ENCODE measurements at regions of chr2 and their contacts with region 1.

Region 1: GRCh38 chr2:86079981-86080911 is 25.4 kb downstream of the POLR1A start:
- DNase-seq: peak; percentile 43 to 92 (median 82)

Region 2: DNA sequence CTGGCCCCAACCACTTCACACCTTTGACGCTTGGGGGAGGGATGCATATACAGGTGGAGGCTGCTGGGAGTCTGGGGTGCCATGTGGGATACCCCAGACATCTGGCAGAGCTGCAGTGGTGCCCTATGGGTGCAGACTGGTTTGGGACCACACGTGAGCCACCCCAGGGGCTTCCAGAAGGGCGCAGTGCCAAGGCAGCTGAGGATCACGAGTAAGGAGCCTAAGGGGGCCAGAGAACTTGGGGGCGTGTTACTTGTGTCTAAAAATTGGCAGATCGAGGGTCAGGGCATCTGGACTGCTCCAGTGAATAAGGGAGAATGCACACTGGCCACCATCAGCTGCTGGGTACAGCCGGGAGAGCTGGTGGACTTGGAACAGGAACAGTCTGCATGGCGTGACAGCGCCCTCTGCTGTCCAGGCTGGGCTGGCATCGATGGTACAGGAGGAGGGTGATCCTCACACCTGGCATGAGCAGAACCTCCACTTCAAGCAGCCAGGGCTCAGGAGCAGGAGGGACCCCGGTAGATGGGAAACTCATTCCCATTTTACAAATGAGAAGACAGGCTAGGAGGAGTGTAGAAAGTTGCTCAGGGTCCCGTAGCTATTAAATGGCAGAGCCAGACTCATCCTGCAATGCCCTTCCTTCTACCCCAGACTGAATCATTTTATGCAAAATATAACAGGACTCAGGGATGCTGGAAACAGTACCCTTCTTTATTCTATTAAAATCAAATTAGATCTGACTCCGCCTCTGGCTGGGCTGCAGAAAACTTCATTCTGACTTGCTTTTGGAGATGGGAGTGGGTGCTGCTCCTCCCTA is 266.1 kb before region 1 on chr2:
- intact Hi-C with region 1: no loop called
- DNase-seq: peak; percentile 84 to 98 (median 95)

Region 3: DNA sequence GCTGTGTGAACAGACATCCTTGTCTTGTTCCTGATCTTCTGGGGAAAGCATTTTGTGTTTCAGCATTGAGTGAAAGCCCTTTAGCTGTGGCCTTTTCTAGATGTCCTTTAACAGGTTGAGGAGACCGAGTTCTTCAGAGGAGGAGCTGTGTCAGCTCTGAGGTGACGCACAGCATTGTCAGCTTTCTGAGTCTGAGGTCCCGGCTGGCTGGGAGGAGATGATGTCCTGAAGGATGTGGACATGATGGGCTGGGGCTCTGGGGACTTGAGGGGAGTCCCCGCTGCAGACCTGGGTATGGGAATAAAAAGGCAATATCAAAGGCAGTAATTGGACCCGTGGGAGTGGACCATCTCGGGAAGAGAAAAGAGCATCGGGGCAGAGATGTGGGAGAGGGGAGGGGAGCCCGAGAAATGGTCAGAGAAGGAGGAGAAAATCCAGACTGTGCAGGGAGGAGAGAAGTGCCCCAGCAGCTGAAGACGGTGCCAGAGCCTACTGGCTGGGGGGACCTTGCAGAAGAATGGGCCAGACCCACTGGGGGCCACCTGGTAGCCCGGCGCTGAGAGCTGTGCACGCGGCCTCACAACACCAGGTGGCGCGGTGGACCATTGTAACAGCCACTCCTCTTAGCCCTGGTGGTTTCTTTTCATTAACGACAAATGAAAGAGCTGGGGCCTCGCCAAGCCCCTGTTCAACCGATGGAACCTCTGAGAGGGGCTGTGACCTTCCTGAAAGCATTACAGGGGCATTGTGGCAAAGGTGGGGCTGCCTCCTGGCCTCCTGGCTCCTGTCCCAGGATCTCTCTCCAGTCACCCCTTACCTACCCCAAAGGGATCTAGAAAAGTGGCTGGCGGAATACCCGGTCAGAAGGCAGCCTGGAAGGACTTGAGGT is 253.0 kb before region 1 on chr2:
- intact Hi-C with region 1: loop called (anchors 5 kb)
- DNase-seq: peak; percentile 66 to 94 (median 84)

Measured in head of caudate nucleus (tissue), 42 donors.